ENCODE measurements at regions of chr4 and their contacts with region 1.

Region 1: DNA sequence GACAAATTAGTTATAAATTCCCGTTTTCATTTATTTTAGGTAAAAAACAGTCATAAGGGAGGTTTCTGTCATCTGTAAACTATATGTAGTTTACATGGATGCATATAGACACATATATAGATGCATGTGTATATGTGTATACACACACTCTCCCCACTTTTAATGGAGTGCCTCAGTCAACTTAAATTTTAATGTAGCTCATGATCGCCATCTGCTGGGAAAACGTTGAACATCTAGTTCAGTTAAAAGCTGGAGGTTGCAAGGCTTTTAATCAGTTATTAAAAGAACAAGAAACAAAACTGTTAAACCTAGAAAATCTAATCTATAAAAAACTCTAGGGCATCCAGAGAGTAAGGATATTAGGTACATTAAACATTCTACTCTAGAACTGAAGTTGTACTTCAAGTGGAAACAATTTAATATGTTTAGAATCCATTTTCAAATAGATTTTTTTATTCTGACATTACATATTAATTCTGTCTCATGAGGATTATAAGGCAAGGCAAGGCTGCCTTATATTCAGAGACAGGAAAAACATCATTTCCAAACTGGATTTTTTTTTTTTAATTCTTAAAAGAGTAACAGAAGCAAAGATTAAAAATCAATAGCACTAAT is 122.6 kb downstream of the SHISA3 start:
- DNase-seq: peak; percentile 47 to 66 (median 62)
- ATAC-seq: no peak
- H3K4me3 ChIP-seq: no peak overlapping the region
- H3K27ac ChIP-seq: no peak overlapping the region
- H3K4me1 ChIP-seq: no peaks in the 10 kb centered on the region
- H3K27me3 ChIP-seq: no peaks in the 10 kb centered on the region
- CTCF ChIP-seq: peak; percentile 20 to 76 (median 67)
- POLR2A ChIP-seq: no peak

Region 2: DNA sequence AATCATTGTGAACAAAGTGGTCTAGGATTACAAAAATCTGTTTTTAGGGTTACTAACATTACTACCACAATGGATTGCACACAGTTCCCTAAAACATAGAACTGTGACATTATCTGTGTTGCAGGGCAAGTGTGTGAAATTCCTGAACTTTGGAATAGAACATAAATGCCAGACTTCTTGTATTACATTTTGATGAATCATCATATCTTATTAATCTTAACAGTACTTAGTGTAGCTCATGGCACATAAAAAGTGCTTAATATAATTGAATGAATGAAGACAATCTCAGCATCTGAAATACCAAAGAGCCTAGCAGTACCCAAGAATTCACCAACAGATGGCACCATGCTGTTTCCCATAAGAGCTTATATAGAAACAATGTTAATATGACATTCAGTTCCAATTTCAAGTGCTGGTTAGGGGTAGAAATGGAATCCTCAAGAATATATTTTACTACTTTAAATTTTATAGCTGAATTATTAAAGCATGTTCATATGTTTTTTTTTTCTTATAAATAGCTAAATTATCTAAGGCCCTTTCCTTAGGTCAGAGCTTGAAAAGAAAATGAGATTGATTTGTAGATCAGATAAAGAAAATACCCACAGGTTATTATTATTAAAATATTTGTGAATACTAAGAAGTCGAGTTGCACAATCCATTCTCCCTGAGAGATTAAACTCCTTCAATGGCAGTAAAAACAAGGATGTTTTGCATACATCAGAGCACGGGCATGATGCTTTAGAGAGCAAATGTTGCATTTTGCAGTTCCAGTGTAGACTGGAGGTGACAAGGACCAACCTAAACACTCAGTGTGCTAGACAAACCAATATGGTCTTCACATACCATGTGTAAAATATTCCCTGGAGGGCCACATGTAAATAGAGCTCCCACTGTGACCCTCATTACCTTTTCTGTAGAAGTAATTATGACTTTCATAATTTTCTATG is 148.3 kb before region 1 on chr4:
- intact Hi-C with region 1: loop called (anchors 5 kb)
- DNase-seq: peak in 3 of 4 donors; percentile 23 to 48 (median 42)
- ATAC-seq: no peak
- H3K4me3 ChIP-seq: no peak overlapping the region
- H3K27ac ChIP-seq: no peak overlapping the region
- H3K4me1 ChIP-seq: no peaks in the 10 kb centered on the region
- H3K27me3 ChIP-seq: no peaks in the 10 kb centered on the region
- CTCF ChIP-seq: peak; percentile 8 to 57 (median 51)
- POLR2A ChIP-seq: no peak

Region 3: GRCh38 chr4:42385516-42385915 is 134.4 kb before region 1 on chr4:
- intact Hi-C with region 1: no loop called
- DNase-seq: no peak
- ATAC-seq: no peak
- H3K4me3 ChIP-seq: no peak overlapping the region
- H3K27ac ChIP-seq: no peak overlapping the region
- H3K4me1 ChIP-seq: peaks cover under 1% of the 10 kb centered on the region
- H3K27me3 ChIP-seq: no peaks in the 10 kb centered on the region
- CTCF ChIP-seq: no peak
- POLR2A ChIP-seq: no peak

Measured in body of pancreas (tissue), 4 donors.